GM10248 (cell line): ENCODE measurements at regions of chr12 and their contacts with region 1.

Region 1: GRCh38 chr12:28814246-28814645 is 334.8 kb upstream of the FAR2 start:
- DNase-seq: no peak
- CTCF ChIP-seq: no peak

Region 2: DNA sequence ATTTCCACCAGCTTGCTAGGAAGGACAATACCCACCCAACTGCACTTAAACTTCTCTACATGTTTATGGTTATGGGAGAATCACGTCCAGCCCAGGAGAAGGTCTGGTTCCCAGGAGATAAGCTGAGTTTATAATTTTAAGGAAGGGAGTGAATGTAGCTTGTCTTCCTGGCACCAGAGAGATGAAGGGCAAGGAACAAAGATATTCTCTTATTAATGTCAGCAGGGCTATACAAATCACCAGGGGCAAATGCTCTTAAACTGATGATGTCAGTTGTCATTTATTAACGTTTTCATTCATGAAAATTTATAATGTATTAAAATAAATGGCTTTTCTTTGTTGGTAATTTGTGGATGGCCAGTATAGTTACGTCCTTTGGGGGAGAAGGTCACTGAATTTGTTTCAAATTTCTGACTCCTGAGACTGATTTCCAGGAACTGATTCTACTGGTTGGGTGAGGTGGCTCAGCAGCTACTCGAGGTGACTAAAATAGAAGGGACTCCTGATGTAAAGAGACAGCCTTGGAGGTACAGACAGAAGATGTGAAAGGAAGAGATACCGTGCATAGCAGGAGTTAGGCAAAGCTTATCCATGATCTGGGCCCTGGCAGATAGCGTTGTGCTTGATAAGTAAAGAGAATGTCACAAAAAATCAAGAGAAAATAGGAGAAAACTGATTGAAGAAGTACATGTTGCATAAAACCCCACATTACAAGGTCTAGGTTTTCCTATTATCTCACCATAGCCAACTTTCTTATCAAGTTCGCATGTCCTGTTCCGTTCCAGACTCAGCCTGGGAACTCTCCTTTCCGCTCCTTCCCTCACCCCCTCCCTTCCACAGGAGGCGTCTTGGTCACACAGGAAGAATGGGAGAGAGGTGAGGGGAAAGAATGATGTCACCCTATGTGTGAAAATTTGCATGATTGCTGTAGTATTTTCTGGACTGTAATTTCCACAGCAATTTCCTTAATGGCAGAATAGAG is 32.3 kb before region 1 on chr12:
- CTCF ChIA-PET with region 1: no interaction called
- POLR2A ChIA-PET with region 1: no interaction called
- DNase-seq: no peak
- CTCF ChIP-seq: no peak

Region 3: GRCh38 chr12:28824849-28825248 is 10.6 kb after region 1 on chr12:
- CTCF ChIA-PET with region 1: interaction called, 19 read pairs
- POLR2A ChIA-PET with region 1: no interaction called
- DNase-seq: no peak
- CTCF ChIP-seq: no peak